ENCODE measurements at regions of chr12 and their contacts with region 1.

Region 1: DNA sequence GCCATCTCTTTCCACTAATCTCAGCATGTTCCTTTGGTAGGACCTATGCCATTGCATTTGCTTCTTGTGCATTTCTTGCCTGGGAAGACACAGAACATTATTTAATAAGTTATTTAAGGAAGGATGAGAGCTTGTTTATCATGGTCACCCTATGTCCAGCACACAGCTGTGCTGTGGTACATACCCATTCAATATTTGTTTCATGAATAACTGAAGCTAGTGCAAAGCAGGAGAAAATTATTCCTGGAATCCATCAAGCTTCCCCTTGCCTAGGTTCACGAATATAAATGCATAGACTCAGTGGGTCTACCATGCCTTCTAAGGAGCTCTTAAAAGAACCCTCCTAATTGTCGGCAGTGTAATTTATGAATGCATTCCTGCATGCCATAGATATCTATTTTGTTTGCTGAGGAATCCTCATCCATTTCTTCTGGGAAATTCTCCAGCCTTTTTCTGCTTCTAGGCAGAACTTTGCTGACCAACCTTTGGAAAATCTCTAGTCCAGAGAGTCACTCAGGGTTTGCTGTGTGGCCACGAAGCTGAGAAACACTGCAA is 599.8 kb upstream of the TMEM132C start:
- DNase-seq: no peak
- ATAC-seq: no peak
- H3K4me3 Mint-ChIP-seq: no peak overlapping the region
- H3K27ac Mint-ChIP-seq: no peak overlapping the region
- H3K4me1 Mint-ChIP-seq: no peaks in the 10 kb centered on the region
- H3K27me3 Mint-ChIP-seq: no peaks in the 10 kb centered on the region

Region 2: GRCh38 chr12:127107744-127108143 is 559.5 kb before region 1 on chr12:
- CTCF ChIA-PET with region 1: no interaction called
- POLR2A ChIA-PET with region 1: no interaction called
- intact Hi-C with region 1: no loop called
- DNase-seq: no peak
- ATAC-seq: no peak
- H3K4me3 Mint-ChIP-seq: no peak overlapping the region
- H3K27ac Mint-ChIP-seq: no peak overlapping the region
- H3K4me1 Mint-ChIP-seq: no peaks in the 10 kb centered on the region
- H3K27me3 Mint-ChIP-seq: peaks cover 22% of the 10 kb centered on the region

Region 3: DNA sequence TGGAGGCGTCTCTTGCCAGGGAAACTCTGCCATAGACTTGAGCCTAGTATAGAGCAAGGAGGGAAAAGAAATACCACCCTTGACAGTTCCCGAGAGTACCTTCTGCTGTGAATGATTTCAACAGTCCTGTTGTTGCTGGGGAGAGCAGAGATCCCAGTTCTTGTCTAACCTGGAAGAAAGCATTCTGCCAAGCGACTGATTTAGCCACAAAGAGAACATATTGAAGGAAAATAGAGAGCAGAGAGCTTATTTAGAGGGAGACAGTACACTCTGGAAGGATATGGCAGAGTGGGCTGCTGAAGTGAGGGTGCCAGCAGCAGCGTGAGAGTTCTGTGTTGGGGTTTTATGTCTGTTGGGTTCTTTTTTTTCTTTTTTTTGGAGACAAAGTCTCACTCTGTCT is 367.1 kb before region 1 on chr12:
- CTCF ChIA-PET with region 1: no interaction called
- POLR2A ChIA-PET with region 1: no interaction called
- intact Hi-C with region 1: no loop called
- DNase-seq: no peak
- ATAC-seq: no peak
- H3K4me3 Mint-ChIP-seq: no peak overlapping the region
- H3K27ac Mint-ChIP-seq: no peak overlapping the region
- H3K4me1 Mint-ChIP-seq: no peaks in the 10 kb centered on the region
- H3K27me3 Mint-ChIP-seq: peaks cover 3% of the 10 kb centered on the region

Region 4: DNA sequence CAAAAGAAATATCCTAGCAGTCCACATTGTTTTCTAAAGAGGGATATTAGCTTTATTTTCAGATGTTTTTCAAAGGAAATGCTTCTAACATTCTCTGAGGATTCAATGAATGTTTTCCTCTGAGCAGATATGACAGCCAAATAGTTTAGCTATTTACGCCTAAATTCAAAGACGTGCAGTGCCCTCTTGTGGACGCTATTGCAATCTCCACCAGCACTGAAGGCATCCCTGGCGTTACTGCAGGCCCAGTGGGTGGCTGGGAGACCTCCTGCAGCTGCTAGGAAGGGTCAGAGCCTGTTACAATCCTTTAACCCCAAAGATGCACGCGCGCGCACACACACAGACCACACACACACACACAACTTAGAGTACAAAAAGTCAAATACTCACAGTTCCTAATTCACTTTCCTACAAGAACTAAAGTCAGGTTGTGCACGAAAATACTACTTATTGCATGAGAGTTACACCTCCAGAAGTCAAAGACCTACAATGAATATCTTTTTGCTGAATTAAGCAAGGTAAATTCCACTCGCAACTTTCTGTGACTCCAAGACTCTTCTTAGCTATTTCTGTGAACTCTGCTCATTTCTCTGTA is 10.4 kb after region 1 on chr12:
- CTCF ChIA-PET with region 1: interaction called, 12 read pairs
- POLR2A ChIA-PET with region 1: no interaction called
- intact Hi-C with region 1: no loop called
- DNase-seq: peak; percentile 74
- ATAC-seq: no peak
- H3K4me3 Mint-ChIP-seq: no peak overlapping the region
- H3K27ac Mint-ChIP-seq: no peak overlapping the region
- H3K4me1 Mint-ChIP-seq: no peaks in the 10 kb centered on the region
- H3K27me3 Mint-ChIP-seq: no peaks in the 10 kb centered on the region

Region 5: GRCh38 chr12:127729381-127729780 is 62.2 kb after region 1 on chr12:
- CTCF ChIA-PET with region 1: no interaction called
- POLR2A ChIA-PET with region 1: no interaction called
- intact Hi-C with region 1: no loop called
- DNase-seq: no peak
- ATAC-seq: no peak
- H3K4me3 Mint-ChIP-seq: no peak overlapping the region
- H3K27ac Mint-ChIP-seq: no peak overlapping the region
- H3K4me1 Mint-ChIP-seq: no peaks in the 10 kb centered on the region
- H3K27me3 Mint-ChIP-seq: no peaks in the 10 kb centered on the region

Region 6: GRCh38 chr12:127742231-127742630 is 75.0 kb after region 1 on chr12:
- CTCF ChIA-PET with region 1: no interaction called
- POLR2A ChIA-PET with region 1: no interaction called
- intact Hi-C with region 1: no loop called
- DNase-seq: no peak
- ATAC-seq: no peak
- H3K4me3 Mint-ChIP-seq: no peak overlapping the region
- H3K27ac Mint-ChIP-seq: no peak overlapping the region
- H3K4me1 Mint-ChIP-seq: no peaks in the 10 kb centered on the region
- H3K27me3 Mint-ChIP-seq: no peaks in the 10 kb centered on the region